ENCODE measurements at regions of chr22 and their contacts with region 1.

Region 1: DNA sequence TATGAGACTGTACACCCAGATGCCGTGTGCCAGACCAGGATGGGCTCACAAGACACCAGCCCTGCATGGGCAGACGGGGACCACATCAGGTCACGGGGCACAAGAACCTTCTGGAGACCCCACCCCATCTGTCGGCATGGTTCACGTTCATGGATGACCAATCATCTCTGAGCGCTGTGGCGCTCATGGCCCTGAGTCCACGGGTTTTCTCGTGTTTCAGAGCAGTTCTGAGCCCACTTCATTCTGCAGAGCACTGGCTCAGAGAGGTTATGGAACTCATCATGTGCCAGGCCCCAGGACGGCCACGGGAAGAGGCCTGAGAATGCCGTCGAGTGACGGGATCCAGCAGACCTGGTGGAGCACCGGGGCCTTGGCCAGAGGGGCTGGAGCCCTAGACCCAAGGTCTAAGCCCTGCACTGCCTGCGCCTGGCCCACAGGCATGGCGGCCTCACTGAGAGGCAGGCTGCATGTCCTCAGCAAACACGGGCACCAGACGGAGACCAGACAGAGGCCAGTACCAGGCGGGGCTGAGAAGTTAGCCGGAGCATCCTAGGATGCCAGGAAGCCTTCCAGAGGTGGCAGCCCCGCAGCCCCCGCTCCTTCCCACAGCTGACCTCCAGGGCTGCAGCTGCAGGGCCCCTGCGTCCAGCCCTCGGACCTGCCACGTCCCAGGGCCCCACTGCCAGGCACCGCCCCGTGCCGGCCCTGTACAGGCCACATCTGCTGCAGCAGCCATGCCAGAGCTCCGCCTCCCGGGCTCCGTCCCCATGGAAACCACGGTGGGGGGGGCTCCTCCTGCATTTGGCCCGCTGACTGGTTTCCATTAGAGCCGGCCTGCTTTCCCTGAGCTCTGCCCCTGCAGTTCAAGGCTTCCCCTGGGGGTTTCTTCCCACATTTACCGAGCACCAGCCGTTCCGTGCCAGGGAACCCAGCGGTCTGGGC is 62.7 kb upstream of the PPARA start:
- DNase-seq: peak; percentile 84
- H3K4me3 Mint-ChIP-seq: peak overlapping the region; percentile 96
- H3K27ac Mint-ChIP-seq: peak overlapping the region; percentile 100
- H3K4me1 Mint-ChIP-seq: peaks cover 40% of the 10 kb centered on the region
- H3K27me3 Mint-ChIP-seq: no peaks in the 10 kb centered on the region
- CTCF ChIP-seq: no peak

Region 2: GRCh38 chr22:46044621-46045438 is 42.8 kb before region 1 on chr22:
- CTCF ChIA-PET with region 1: no interaction called
- POLR2A ChIA-PET with region 1: interaction called, 1,278 read pairs
- intact Hi-C with region 1: no loop called
- DNase-seq: no peak
- H3K4me3 Mint-ChIP-seq: peak overlapping the region; percentile 79
- H3K27ac Mint-ChIP-seq: peak overlapping the region; percentile 97
- H3K4me1 Mint-ChIP-seq: peaks cover 14% of the 10 kb centered on the region
- H3K27me3 Mint-ChIP-seq: no peaks in the 10 kb centered on the region
- CTCF ChIP-seq: no peak

Region 3: GRCh38 chr22:46064228-46064965 is 23.2 kb before region 1 on chr22:
- CTCF ChIA-PET with region 1: interaction called, 16 read pairs
- POLR2A ChIA-PET with region 1: interaction called, 1,278 read pairs
- intact Hi-C with region 1: loop called (anchors 1 kb)
- DNase-seq: peak; percentile 61
- H3K4me3 Mint-ChIP-seq: peak overlapping the region; percentile 74
- H3K27ac Mint-ChIP-seq: peak overlapping the region; percentile 100
- H3K4me1 Mint-ChIP-seq: peaks cover 54% of the 10 kb centered on the region
- H3K27me3 Mint-ChIP-seq: no peaks in the 10 kb centered on the region
- CTCF ChIP-seq: no peak

Region 4: GRCh38 chr22:46071451-46072109 is 16.0 kb before region 1 on chr22:
- CTCF ChIA-PET with region 1: interaction called, 9 read pairs
- POLR2A ChIA-PET with region 1: interaction called, 1,278 read pairs
- intact Hi-C with region 1: no loop called
- DNase-seq: peak; percentile 96
- H3K4me3 Mint-ChIP-seq: peak overlapping the region; percentile 96
- H3K27ac Mint-ChIP-seq: peak overlapping the region; percentile 100
- H3K4me1 Mint-ChIP-seq: peaks cover 24% of the 10 kb centered on the region
- H3K27me3 Mint-ChIP-seq: no peaks in the 10 kb centered on the region
- CTCF ChIP-seq: no peak

Region 5: GRCh38 chr22:46108564-46109473 is 21.2 kb after region 1 on chr22:
- CTCF ChIA-PET with region 1: interaction called, 3 read pairs
- POLR2A ChIA-PET with region 1: interaction called, 19 read pairs
- intact Hi-C with region 1: loop called (anchors 2 kb)
- DNase-seq: peak; percentile 72
- H3K4me3 Mint-ChIP-seq: peak overlapping the region; percentile 12
- H3K27ac Mint-ChIP-seq: peak overlapping the region; percentile 93
- H3K4me1 Mint-ChIP-seq: peaks cover 34% of the 10 kb centered on the region
- H3K27me3 Mint-ChIP-seq: no peaks in the 10 kb centered on the region
- CTCF ChIP-seq: peak; percentile 7

Measured in MCF 10A (cell line).